CD8-positive, alpha-beta memory T cell (primary cell): ENCODE measurements at regions of chr9 and their contacts with region 1.

Region 1: DNA sequence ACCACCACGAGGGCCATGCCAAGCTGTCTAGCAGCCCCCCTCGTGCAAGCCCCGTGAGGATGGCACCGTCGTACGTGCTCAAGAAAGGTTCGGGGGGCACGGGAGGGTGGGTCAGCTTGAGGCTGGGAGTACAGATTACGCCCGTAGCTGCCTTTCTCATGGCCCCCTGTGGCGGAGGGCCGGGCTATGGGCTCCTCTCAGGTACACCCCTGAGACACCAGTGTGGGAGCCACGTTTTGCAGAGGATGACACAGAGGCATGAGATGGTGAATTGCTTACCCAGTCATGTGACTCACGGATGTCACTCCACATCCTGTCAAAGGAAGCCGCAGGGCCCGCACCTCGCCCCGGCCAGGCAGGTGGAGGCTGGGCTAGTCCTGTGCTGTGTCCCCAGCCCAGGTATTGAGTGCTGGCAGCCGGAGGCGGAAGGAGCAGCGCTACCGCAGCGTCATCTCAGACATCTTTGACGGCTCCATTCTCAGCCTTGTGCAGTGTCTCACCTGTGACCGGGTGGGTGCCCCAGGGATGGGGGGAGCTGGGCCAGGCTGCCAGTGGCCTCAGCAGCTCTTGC is 33.7 kb downstream of the USP20 start:
- DNase-seq: peak; percentile 84 to 97 (median 95)
- H3K4me3 ChIP-seq: peak overlapping the region; percentile 62
- H3K4me3 Mint-ChIP-seq: peak overlapping the region; percentile 44 to 84 (median 71)
- H3K27ac ChIP-seq: peak overlapping the region; percentile 87
- H3K27ac Mint-ChIP-seq: peak overlapping the region; percentile 92 to 99 (median 96)
- H3K4me1 ChIP-seq: peaks cover 82% of the 10 kb centered on the region
- H3K4me1 Mint-ChIP-seq: peaks cover 60 to 90% (median 80%) of the 10 kb centered on the region in 3 donors
- H3K27me3 ChIP-seq: no peaks in the 10 kb centered on the region
- H3K27me3 Mint-ChIP-seq: no peaks in the 10 kb centered on the region

Region 2: GRCh38 chr9:129962889-129963703 is 94.1 kb after region 1 on chr9:
- CTCF ChIA-PET with region 1: no interaction called
- POLR2A ChIA-PET with region 1: interaction called, 10 read pairs
- DNase-seq: peak; percentile 66 to 87 (median 85)
- H3K4me3 ChIP-seq: peak overlapping the region; percentile 76
- H3K4me3 Mint-ChIP-seq: peak overlapping the region; percentile 86 to 91 (median 87)
- H3K27ac ChIP-seq: peak overlapping the region; percentile 79
- H3K27ac Mint-ChIP-seq: peak overlapping the region; percentile 87 to 99 (median 97)
- H3K4me1 ChIP-seq: peaks cover 56% of the 10 kb centered on the region
- H3K4me1 Mint-ChIP-seq: peaks cover 60 to 81% (median 74%) of the 10 kb centered on the region in 3 donors
- H3K27me3 ChIP-seq: no peaks in the 10 kb centered on the region
- H3K27me3 Mint-ChIP-seq: no peaks in the 10 kb centered on the region